Upper lobe of right lung (tissue), 1 donor: ENCODE measurements at regions of chr20 and their contacts with region 1.

Region 1: DNA sequence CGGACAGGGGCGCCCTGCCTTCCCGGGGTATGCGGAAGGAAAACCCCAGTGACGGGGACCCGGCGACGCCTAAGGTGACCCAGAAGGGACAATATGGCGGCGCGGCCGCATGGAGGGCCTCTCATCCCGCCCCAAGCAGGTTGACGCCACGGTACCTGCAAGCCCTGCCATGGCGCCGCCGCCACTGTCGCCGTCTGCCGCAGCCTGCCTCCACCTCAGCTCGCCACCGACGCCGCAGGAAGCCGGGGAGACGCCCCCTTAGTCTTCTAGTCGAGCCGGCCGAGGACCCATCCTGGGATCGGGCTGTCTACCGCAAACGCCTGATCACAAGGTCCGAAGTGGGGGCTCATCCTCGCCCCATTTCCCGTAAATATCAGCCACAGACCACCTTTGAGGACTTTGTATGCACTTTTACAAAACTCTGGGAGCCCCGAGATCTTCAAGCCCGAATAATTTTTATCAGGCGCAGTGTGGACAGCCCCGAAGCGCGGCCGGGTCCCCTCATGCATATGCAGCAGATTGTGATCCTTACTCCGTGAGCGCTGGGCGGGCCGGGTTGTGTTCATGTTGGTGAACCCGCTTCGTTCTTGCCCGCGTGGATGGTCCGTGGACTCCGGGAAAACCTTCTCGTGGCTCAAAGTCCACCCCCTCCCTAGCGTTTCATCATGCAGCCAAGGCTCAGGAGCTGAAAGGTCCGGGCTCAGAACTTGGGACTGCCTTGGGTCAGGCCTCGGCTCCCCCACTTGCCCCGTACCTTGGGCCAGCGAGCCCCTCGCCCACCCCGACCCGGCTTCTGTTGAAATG is at the start of gene BLCAP:
- DNase-seq: peak; percentile 95
- ATAC-seq: peak; percentile 93
- H3K4me3 ChIP-seq: peak within 1 kb of the TSS; percentile 90
- H3K27ac ChIP-seq: peak within 1 kb of the TSS; percentile 100
- H3K4me1 ChIP-seq: peaks cover 27% of the 10 kb centered on the region
- H3K27me3 ChIP-seq: no peaks in the 10 kb centered on the region
- CTCF ChIP-seq: no peak
- total RNA-seq, gene BLCAP: 74.8 TPM

Region 2: GRCh38 chr20:37265152-37265551 is 262.7 kb before region 1 on chr20:
- intact Hi-C with region 1: loop called (anchors 5 kb)
- DNase-seq: no peak
- ATAC-seq: peak; percentile 73
- H3K4me3 ChIP-seq: no peak overlapping the region
- H3K27ac ChIP-seq: no peak overlapping the region
- H3K4me1 ChIP-seq: peaks cover 3% of the 10 kb centered on the region
- H3K27me3 ChIP-seq: peaks cover 7% of the 10 kb centered on the region
- CTCF ChIP-seq: no peak

Region 3: DNA sequence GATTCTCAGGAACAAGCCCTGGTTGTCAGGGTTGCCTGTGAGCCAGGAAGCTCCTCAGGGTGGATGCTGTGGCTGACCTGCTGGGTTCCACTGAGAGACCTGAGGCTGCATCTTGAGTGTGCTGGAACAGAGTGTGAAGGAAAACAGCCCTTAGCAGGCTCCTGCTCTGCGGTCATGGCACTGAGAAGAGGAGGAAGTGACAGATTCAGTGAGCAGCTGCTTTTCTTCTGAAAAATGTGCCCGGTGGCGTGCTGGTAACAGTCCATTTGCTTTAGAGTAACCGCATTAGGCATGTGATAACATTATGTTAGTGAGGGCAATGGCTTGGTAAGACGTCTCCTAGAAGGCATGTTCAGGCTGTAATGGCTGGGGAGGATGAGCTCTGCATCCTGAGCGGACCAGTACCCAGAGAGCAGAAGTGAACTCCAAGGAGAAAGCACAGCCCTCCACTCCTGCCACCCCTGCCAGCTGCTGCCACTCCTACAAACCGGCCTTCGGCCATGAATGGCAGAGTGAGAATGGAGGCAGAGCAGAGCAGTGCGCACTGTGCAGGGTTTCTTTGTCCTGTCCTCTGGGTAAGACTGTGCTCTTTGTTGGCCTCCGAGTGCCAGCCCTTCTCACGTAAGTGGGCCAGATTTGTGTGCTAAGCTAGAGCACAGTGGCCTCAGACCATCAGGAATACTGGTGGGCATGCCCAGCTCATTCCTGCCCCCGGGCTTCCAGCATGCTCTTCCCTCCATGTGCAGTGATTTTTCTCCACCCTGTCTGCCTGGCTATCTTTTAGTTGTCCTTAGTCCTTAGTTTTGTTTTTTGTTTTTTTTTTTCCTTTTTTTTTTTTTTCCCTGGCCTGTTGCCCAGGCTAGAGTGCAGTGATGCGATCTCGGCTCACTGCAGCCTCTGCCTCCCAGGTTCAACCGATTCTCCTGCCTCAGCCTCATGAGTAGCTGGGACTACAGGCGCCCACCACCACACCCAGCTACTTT is 277.0 kb after region 1 on chr20:
- intact Hi-C with region 1: no loop called
- DNase-seq: no peak
- ATAC-seq: peak; percentile 43
- H3K4me3 ChIP-seq: no peak overlapping the region
- H3K27ac ChIP-seq: no peak overlapping the region
- H3K4me1 ChIP-seq: no peaks in the 10 kb centered on the region
- H3K27me3 ChIP-seq: no peaks in the 10 kb centered on the region
- CTCF ChIP-seq: no peak